Pancreas (tissue), 10 donors: ENCODE measurements at regions of chr18 and their contacts with region 1.

Region 1: DNA sequence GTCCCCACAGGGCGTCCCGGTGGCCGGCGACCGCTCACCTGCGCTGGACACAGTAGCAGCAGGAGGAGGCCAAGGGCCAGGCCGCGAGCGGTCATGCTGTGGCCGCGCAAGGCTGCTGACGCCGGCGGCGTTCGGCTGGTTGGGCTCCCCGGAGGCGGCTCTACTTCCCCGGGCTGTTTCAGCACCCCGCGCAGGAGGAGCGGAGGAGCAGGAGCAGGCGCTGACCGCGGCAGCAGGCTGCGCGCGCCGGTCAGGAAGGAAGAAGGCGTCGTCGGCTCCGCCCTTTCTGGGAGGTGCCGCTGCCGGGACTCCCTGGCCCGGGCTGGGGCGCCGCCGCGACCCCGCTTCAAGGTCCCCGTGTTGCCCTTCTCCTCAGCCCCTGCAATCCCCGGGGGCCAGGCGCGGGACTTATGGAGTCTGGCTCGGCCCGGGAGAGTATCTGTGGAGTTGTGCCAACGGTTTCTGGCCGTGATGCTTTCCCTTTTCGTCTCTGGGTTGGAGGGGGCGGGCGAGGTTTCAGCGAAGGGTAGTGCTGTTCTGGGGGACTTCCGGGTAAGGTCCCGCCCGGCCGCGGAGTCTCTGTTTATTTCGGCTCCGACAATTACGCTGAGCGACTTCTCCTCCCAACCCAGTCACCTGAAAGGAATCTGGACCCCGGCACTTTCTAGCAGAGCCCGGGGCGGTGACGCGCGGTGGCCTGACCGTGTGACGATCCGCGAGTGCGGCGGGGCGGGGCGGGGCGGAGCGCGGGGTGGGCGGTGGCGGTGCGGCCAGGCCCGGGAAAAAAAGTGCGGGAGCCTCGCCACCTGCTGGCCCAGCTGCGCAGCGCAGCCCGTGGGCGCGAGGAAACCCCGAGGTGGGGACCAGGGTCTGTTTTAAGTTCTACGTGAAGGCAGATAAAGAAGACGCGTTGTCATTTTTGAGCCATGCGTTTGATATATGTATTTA is at the start of gene NPC1:
- DNase-seq: peak; percentile 93 to 97 (median 95)
- ATAC-seq: peak; percentile 95 to 98 (median 97)
- H3K4me3 ChIP-seq: peak within 1 kb of the TSS; percentile 80 to 84 (median 83)
- H3K27ac ChIP-seq: peak within 1 kb of the TSS; percentile 98 to 99 (median 99)
- H3K4me1 ChIP-seq: peaks cover 0 to 15% (median 0%) of the 10 kb centered on the region in 3 donors
- H3K27me3 ChIP-seq: no peaks in the 10 kb centered on the region
- CTCF ChIP-seq: peak; percentile 88 to 93 (median 92)
- total RNA-seq, gene NPC1: 10.1 to 25.6 (median 11.5) TPM

Region 2: DNA sequence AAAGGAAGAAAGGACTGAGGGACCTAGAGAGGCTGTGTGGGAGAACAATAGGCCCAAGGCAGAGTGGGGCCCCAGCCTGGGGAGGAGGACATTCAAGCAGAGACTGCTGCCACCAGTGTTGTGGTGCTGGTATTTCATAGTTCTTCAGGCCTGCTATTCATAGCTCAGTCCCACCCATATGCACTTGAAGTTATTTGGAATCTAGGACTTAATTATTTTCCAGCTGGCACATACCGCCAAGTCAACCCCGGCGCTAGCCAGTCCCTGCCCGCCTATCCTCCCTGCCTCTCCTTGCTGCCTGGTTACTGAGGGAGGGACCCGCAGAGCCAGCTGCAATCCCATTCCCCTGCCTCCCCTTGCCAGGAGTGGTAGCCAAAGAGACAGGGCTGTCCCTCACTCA is 310.1 kb before region 1 on chr18:
- intact Hi-C with region 1: no loop called
- DNase-seq: no peak
- ATAC-seq: no peak
- H3K4me3 ChIP-seq: no peak overlapping the region
- H3K27ac ChIP-seq: no peak overlapping the region
- H3K4me1 ChIP-seq: no peaks in the 10 kb centered on the region
- H3K27me3 ChIP-seq: no peaks in the 10 kb centered on the region
- CTCF ChIP-seq: no peak

Region 3: DNA sequence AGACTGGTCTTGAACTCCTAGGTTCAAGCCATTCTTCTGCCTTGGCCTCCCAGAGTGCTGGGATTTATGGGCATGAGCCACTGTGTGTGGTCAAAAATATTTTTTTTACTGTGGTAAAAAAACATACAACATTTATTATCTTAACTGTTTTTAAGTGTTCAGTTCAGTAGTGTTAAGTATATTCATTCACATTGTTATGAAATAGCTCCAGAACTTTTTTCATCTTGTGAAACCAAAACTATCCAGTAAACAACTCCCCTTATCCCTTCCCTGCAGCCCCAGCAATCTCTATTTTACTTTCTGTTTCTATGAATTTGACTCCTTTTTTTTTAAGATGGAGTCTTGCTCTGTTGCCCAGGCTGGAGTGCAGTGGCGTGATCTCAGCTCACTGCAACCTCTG is 73.9 kb before region 1 on chr18:
- intact Hi-C with region 1: loop called in 1 of 3 experiments (anchors 5 kb)
- DNase-seq: no peak
- ATAC-seq: no peak
- H3K4me3 ChIP-seq: no peak overlapping the region
- H3K27ac ChIP-seq: no peak overlapping the region
- H3K4me1 ChIP-seq: no peaks in the 10 kb centered on the region
- H3K27me3 ChIP-seq: no peaks in the 10 kb centered on the region
- CTCF ChIP-seq: no peak